A673 (cell line): ENCODE measurements at regions of chr5 and their contacts with region 1.

Region 1: GRCh38 chr5:76641514-76642120 is 18.4 kb upstream of the F2RL2 start:
- DNase-seq: peak; percentile 88
- H3K4me3 ChIP-seq: no peak overlapping the region
- H3K27ac ChIP-seq: no peak overlapping the region
- H3K4me1 ChIP-seq: peaks cover 6% of the 10 kb centered on the region
- H3K27me3 ChIP-seq: no peaks in the 10 kb centered on the region
- CTCF ChIP-seq: peak; percentile 94

Region 2: DNA sequence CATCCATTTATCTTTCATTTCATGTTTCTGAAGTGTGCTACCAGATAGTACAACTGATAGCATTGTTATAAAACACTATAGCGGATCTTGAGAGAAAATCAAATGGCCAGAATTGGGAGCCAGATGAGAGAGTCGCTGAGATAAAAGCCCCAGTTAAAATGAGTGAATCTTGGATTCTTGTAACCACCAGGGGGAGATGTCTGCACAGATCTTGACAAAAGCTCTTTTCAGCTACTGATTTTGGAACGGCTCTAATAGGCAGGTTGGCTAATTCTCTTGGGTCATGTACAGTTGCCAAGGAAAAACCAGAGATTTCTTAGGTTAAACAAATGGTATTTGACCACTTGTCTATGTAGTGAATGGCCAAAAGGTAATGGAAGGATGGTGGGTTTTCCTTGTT is 40.1 kb before region 1 on chr5:
- CTCF ChIA-PET with region 1: interaction called, 6 read pairs
- POLR2A ChIA-PET with region 1: no interaction called
- intact Hi-C with region 1: loop called (anchors 1 kb)
- DNase-seq: peak; percentile 85
- H3K4me3 ChIP-seq: no peak overlapping the region
- H3K27ac ChIP-seq: no peak overlapping the region
- H3K4me1 ChIP-seq: peaks cover 38% of the 10 kb centered on the region
- H3K27me3 ChIP-seq: no peaks in the 10 kb centered on the region
- CTCF ChIP-seq: peak; percentile 84

Region 3: DNA sequence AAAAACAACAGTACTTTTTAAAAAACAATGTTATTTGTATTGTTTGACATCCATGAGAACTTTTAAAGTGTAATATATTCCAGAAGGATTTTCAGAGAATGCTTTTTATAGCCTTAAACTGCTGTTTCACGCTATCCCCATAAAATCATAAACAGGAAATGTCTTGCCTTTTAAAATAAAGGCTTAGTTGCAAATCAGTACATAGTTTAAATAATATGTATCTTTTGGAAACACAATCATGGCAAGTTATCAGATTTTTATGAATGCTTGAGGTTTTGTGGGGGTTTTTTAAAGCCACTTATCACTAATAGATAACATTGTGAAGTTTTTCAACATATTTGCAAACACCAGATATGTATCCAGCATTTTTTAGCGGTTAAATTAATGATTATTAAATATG is 18.7 kb after region 1 on chr5:
- CTCF ChIA-PET with region 1: no interaction called
- POLR2A ChIA-PET with region 1: no interaction called
- intact Hi-C with region 1: no loop called
- DNase-seq: peak; percentile 33
- H3K4me3 ChIP-seq: no peak overlapping the region
- H3K27ac ChIP-seq: no peak overlapping the region
- H3K4me1 ChIP-seq: peaks cover 26% of the 10 kb centered on the region
- H3K27me3 ChIP-seq: no peaks in the 10 kb centered on the region
- CTCF ChIP-seq: no peak

Region 4: GRCh38 chr5:76942581-76942980 is 301.0 kb after region 1 on chr5:
- CTCF ChIA-PET with region 1: no interaction called
- POLR2A ChIA-PET with region 1: no interaction called
- intact Hi-C with region 1: no loop called
- DNase-seq: no peak
- H3K4me3 ChIP-seq: no peak overlapping the region
- H3K27ac ChIP-seq: no peak overlapping the region
- H3K4me1 ChIP-seq: no peaks in the 10 kb centered on the region
- H3K27me3 ChIP-seq: no peaks in the 10 kb centered on the region
- CTCF ChIP-seq: no peak